ENCODE measurements at regions of chr5 and their contacts with region 1.

Region 1: GRCh38 chr5:62305715-62306322 is at the start of gene KIF2A:
- DNase-seq: peak; percentile 97
- total RNA-seq, gene KIF2A: 13.4 TPM

Region 2: GRCh38 chr5:62152394-62153087 is 153.3 kb before region 1 on chr5:
- intact Hi-C with region 1: no loop called
- DNase-seq: no peak

Region 3: GRCh38 chr5:62206150-62206829 is 99.5 kb before region 1 on chr5:
- intact Hi-C with region 1: no loop called
- DNase-seq: no peak

Region 4: DNA sequence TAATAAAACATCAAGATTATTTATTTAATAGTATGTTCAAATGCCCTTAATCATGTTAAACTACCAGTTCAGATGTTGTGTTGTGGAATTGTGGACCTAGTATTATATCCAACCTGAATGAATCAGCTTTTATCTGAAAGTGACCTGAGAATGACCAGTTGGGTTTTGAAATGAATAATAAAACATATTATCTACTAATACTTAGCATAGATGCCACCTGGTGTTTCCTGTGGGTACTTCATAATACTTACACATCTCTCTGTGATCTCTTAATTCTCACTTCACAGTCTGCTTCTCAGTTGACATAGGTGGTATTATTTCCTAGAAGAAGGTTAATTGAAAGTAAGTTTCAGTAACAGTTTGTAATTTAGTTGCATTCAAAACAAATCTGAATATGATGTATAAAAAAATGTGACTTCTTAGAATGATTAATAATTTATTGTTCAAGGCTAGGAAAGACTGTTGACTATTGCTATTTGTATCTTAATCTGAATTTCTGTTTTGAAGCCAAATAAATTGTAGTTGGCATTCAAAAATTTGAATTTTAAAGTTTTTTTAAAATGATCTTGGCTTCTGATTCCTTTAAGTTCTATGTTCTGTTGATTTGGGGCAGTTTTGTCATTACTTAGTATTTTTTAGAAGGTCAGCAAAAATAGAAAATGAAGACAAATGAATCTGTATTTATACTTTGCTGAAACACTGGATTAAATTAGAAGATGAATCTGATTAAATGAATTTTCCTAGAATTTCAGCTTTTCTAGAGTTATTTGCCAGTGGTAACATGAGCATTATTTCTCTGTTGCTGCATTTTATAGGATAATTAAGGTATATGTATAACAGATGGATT is 48.4 kb after region 1 on chr5:
- intact Hi-C with region 1: loop called (anchors 10 kb)
- DNase-seq: no peak

Region 5: GRCh38 chr5:62403434-62404250 is 97.8 kb after region 1 on chr5 and contains the start of gene DIMT1:
- intact Hi-C with region 1: loop called (anchors 5 kb)
- DNase-seq: peak; percentile 99
- total RNA-seq, gene DIMT1: 18.0 TPM